ENCODE measurements at regions of chr1 and their contacts with region 1.

Region 1: GRCh38 chr1:206094024-206094423 is 23.2 kb downstream of the AVPR1B start:
- DNase-seq: no peak
- H3K4me3 ChIP-seq: no peak overlapping the region
- H3K27ac ChIP-seq: no peak overlapping the region
- H3K4me1 ChIP-seq: no peaks in the 10 kb centered on the region
- H3K27me3 ChIP-seq: no peaks in the 10 kb centered on the region
- CTCF ChIP-seq: no peak
- POLR2A ChIP-seq: no peak

Region 2: DNA sequence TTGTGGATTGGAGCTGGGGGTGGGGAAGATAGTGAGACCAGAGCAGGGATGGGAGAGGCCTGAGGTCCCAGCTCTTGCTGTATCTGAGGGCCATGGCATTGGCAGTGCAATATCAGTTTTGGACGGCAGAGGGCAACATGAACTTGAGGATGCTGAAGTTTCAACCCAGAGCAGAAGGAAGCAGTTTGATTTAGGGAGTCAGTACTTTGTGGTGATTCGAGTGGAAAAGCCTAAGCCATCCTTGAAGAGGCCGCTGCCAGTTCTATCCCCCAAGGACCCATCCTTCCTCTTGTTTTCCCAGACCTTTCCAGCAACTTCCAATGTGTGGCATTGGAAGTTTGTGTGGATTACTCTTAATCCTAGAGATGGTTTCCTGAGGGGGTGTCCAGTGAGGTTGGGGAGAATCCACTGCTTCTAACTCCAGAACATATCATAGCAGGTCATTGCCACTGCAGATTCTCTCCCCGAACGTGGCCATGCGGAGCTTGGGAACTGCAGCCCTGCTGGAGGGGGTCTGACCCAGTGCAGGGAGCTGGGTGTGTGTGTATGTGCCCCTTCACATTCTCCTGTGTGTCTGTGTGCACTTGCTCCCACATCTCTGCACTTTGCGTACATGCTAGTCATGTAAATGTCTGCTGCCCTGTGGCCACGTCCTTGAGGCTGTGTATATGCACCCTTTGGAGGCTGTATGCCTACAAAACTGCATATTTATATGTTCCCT is 174.8 kb before region 1 on chr1:
- intact Hi-C with region 1: loop called (anchors 10 kb)
- DNase-seq: no peak
- H3K4me3 ChIP-seq: no peak overlapping the region
- H3K27ac ChIP-seq: no peak overlapping the region
- H3K4me1 ChIP-seq: no peaks in the 10 kb centered on the region
- H3K27me3 ChIP-seq: no peaks in the 10 kb centered on the region
- CTCF ChIP-seq: peak; percentile 71 to 92 (median 76)
- POLR2A ChIP-seq: no peak

Region 3: GRCh38 chr1:206050655-206051235 is 43.3 kb before region 1 on chr1:
- intact Hi-C with region 1: loop called (anchors 2 kb)
- DNase-seq: no peak
- H3K4me3 ChIP-seq: no peak overlapping the region
- H3K27ac ChIP-seq: no peak overlapping the region
- H3K4me1 ChIP-seq: peaks cover 6% of the 10 kb centered on the region
- H3K27me3 ChIP-seq: no peaks in the 10 kb centered on the region
- CTCF ChIP-seq: no peak
- POLR2A ChIP-seq: no peak